ENCODE measurements at regions of chr1 and their contacts with region 1.

Region 1: GRCh38 chr1:21216835-21217811 is 40.4 kb upstream of the EIF4G3 start:
- DNase-seq: peak; percentile 86
- ATAC-seq: peak; percentile 71
- H3K4me3 Mint-ChIP-seq: no peak overlapping the region
- H3K27ac Mint-ChIP-seq: peak overlapping the region; percentile 37
- H3K4me1 Mint-ChIP-seq: no peaks in the 10 kb centered on the region
- H3K27me3 Mint-ChIP-seq: no peaks in the 10 kb centered on the region

Region 2: DNA sequence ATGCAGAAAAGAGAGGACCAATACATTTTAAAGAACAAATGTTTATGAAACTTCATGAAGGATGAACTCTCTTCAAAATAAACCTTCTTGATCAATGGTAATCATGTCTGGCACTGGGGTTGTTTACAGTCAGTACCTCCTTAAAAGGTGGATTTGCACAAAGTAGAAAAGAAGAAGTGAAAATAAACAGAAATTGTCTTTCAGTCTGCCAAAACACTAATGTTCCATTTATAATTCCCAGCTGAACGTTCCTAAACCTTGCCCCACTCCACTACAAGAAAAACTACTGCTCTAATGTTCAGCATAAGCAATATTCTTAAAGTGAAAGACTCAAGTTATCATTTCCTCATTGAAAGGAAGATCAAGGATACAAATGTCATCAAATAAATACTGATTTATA is 126.7 kb before region 1 on chr1:
- CTCF ChIA-PET with region 1: no interaction called
- POLR2A ChIA-PET with region 1: no interaction called
- intact Hi-C with region 1: no loop called
- DNase-seq: no peak
- ATAC-seq: no peak
- H3K4me3 Mint-ChIP-seq: no peak overlapping the region
- H3K27ac Mint-ChIP-seq: no peak overlapping the region
- H3K4me1 Mint-ChIP-seq: peaks cover 5% of the 10 kb centered on the region
- H3K27me3 Mint-ChIP-seq: no peaks in the 10 kb centered on the region

Region 3: DNA sequence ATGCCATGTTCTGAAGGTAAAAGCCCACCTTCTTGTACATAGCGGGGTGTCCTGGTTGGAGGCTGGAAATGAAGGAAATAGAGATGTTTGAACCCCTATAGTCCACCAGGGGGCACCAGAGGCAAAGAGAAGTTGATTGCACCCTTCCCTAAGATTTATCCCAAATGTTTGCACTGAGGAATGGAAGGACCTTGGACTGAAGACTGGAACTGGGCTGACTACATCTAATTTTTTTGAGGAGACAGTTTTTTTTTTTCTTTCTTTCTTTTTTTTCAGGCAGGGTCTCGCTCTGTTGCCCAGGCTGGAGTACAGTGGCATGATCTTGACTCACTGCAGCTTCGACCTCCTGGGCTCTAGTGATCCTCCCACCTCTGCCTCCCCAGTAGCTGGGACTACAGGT is 14.9 kb after region 1 on chr1:
- CTCF ChIA-PET with region 1: interaction called, 32 read pairs
- POLR2A ChIA-PET with region 1: no interaction called
- intact Hi-C with region 1: no loop called
- DNase-seq: peak; percentile 38
- ATAC-seq: no peak
- H3K4me3 Mint-ChIP-seq: no peak overlapping the region
- H3K27ac Mint-ChIP-seq: no peak overlapping the region
- H3K4me1 Mint-ChIP-seq: no peaks in the 10 kb centered on the region
- H3K27me3 Mint-ChIP-seq: no peaks in the 10 kb centered on the region

Region 4: GRCh38 chr1:21439721-21440629 is 222.9 kb after region 1 on chr1 and contains the start of gene NBPF3:
- CTCF ChIA-PET with region 1: interaction called, 3 read pairs
- POLR2A ChIA-PET with region 1: no interaction called
- intact Hi-C with region 1: loop called in 1 of 2 experiments (anchors 2 kb)
- DNase-seq: peak; percentile 96
- ATAC-seq: peak; percentile 98
- H3K4me3 Mint-ChIP-seq: peak within 1 kb of the TSS; percentile 91
- H3K27ac Mint-ChIP-seq: peak within 1 kb of the TSS; percentile 93
- H3K4me1 Mint-ChIP-seq: peaks cover 17% of the 10 kb centered on the region
- H3K27me3 Mint-ChIP-seq: peaks cover 3% of the 10 kb centered on the region
- total RNA-seq, gene NBPF3: 8.5 to 9.9 TPM

Region 5: GRCh38 chr1:21490774-21491553 is 273.8 kb after region 1 on chr1:
- CTCF ChIA-PET with region 1: no interaction called
- POLR2A ChIA-PET with region 1: no interaction called
- intact Hi-C with region 1: loop called in 1 of 2 experiments (anchors 2 kb)
- DNase-seq: peak; percentile 63
- ATAC-seq: peak; percentile 67
- H3K4me3 Mint-ChIP-seq: no peak overlapping the region
- H3K27ac Mint-ChIP-seq: no peak overlapping the region
- H3K4me1 Mint-ChIP-seq: peaks cover 8% of the 10 kb centered on the region
- H3K27me3 Mint-ChIP-seq: peaks cover 10% of the 10 kb centered on the region